ENCODE measurements at regions of chr10 and their contacts with region 1.

Region 1: DNA sequence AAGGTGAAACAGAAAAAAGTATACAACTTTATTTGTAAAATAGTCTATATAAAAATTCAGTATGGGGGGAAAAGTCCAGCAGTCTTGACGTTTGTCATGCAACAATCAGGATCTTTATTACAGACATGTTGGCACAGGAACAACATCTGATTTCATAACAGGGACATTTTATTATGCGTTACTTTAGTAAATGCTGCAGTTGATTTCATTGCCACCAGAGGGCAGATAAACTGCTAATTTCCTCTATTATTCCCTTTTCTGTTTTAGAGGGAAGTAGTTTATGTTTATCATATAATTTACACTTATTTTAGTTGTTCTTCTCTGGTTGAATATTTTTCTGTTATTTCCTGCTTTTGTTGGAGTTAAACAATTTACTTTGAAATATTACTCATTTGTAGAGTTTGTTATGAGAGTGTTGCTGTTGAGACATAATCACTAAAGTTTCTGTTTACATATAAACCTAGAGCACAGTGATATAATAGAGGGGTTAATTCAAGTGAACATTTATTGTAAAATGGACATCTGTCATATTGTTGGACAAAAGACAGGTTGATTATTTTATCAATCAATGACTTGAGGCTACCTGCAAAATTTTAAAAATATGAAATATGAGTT is 3.3 kb downstream of the PLXDC2 start:
- DNase-seq: peak; percentile 43
- ATAC-seq: no peak
- H3K4me3 ChIP-seq: no peak overlapping the region
- H3K27ac ChIP-seq: no peak overlapping the region
- H3K4me1 ChIP-seq: no peaks in the 10 kb centered on the region
- H3K27me3 ChIP-seq: peaks cover 2% of the 10 kb centered on the region; the same call in 1 of the 2 replicates
- CTCF ChIP-seq: peak; percentile 74
- POLR2A ChIP-seq: no peak
- RAD21 ChIP-seq: peak; percentile 66

Region 2: GRCh38 chr10:19412531-19412930 is 407.0 kb before region 1 on chr10:
- CTCF ChIA-PET with region 1: no interaction called
- POLR2A ChIA-PET with region 1: no interaction called
- dilution Hi-C with region 1: no loop called
- in situ Hi-C with region 1: no loop called
- intact Hi-C with region 1: loop called (anchors 1 kb)
- DNase-seq: peak; percentile 45
- ATAC-seq: peak; percentile 69
- H3K4me3 ChIP-seq: no peak overlapping the region
- H3K27ac ChIP-seq: no peak overlapping the region
- H3K4me1 ChIP-seq: no peaks in the 10 kb centered on the region
- H3K27me3 ChIP-seq: no peaks in the 10 kb centered on the region
- CTCF ChIP-seq: peak; percentile 52
- POLR2A ChIP-seq: no peak
- RAD21 ChIP-seq: peak; percentile 66

Region 3: DNA sequence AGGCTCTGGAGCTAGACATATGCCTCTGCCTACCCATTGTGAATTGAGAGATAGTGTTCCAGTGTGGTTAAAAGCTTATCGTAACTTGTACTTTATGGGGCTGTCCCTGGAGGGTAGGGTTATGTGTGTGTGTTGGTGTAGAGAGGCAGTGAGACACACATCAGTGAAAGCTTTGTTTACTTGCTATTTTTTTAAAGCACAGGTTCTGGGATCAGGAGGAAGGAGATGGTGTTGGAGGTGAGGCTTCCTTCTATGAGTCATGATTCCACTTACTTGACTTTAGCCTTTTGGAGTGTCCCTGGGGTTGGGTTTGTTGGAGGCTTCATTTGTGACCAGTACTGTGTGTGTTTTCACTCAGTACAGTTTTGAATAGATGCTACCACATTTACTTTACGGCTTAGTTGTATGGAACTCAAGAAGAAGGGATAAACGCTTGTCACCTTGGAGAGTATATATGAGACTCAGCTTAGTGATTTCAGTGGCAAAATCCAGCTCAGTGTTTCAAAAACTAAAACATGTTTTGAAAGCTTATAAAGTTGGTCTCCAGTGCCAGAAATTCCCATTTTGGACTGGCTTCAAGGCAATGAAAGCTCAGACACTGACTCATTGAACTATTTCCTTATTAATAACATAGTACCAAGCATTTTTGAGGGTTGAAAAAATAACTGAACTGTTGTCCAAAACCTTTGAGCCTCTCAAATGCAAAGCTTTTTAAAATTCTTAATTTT is 102.9 kb after region 1 on chr10:
- CTCF ChIA-PET with region 1: no interaction called
- POLR2A ChIA-PET with region 1: no interaction called
- dilution Hi-C with region 1: no loop called
- in situ Hi-C with region 1: no loop called
- intact Hi-C with region 1: loop called (anchors 2 kb)
- DNase-seq: peak; percentile 71
- ATAC-seq: peak; percentile 65
- H3K4me3 ChIP-seq: no peak overlapping the region
- H3K27ac ChIP-seq: 0 out of 2 replicates have a peak overlapping the region, but pooled peaks have one; percentile 40
- H3K4me1 ChIP-seq: peaks cover 13% of the 10 kb centered on the region
- H3K27me3 ChIP-seq: no peaks in the 10 kb centered on the region
- CTCF ChIP-seq: no peak
- POLR2A ChIP-seq: no peak
- RAD21 ChIP-seq: no peak

Region 4: GRCh38 chr10:20105243-20105642 is 285.7 kb after region 1 on chr10:
- CTCF ChIA-PET with region 1: no interaction called
- POLR2A ChIA-PET with region 1: no interaction called
- dilution Hi-C with region 1: no loop called
- in situ Hi-C with region 1: no loop called
- intact Hi-C with region 1: loop called (anchors 5 kb)
- DNase-seq: peak; percentile 31
- ATAC-seq: peak; percentile 5; the same call in 1 of the 2 replicates
- H3K4me3 ChIP-seq: no peak overlapping the region
- H3K27ac ChIP-seq: peak overlapping the region; percentile 89
- H3K4me1 ChIP-seq: peaks cover 7% of the 10 kb centered on the region
- H3K27me3 ChIP-seq: no peaks in the 10 kb centered on the region
- CTCF ChIP-seq: no peak
- POLR2A ChIP-seq: no peak
- RAD21 ChIP-seq: no peak

Region 5: GRCh38 chr10:20768843-20769242 is 949.3 kb after region 1 on chr10:
- CTCF ChIA-PET with region 1: no interaction called
- POLR2A ChIA-PET with region 1: no interaction called
- dilution Hi-C with region 1: no loop called
- in situ Hi-C with region 1: no loop called
- intact Hi-C with region 1: loop called (anchors 2 kb)
- DNase-seq: no peak
- ATAC-seq: no peak
- H3K4me3 ChIP-seq: no peak overlapping the region
- H3K27ac ChIP-seq: no peak overlapping the region
- H3K4me1 ChIP-seq: no peaks in the 10 kb centered on the region
- H3K27me3 ChIP-seq: no peaks in the 10 kb centered on the region
- CTCF ChIP-seq: peak; percentile 35
- POLR2A ChIP-seq: no peak
- RAD21 ChIP-seq: no peak; the same call in 1 of the 2 replicates

Region 6: DNA sequence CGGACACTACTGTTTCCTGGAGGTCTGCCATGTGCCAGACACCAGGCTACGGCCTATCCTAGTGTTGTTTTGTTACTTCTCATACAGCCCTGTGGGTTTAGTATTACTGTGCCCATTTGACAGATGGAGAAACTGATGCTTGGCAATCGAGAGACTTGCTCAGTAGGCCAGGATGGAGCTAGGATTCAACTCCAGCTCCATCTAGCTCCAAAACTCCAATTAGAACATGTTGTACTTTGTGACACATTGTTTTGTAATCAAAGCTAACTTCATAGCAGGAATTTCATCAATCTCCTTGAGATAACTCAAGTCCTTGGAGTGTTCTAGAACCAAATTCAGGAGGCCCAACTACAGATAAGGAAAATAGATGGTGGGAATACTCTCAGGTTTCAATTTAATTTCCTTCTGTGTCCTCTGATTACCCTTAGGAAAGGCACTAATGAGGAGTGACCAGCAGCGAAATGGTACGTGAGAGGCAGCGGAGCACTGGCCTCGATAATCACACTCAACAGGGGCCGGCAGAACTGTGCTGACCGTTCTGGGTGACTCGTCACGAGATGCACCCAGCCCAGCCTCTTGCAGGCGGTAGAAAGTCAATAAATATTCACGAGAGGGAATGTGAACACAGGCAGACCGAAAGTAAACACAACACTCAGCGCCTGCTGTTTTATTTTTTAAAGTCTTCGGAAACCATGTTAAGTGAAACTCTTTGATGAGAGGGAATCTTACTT is 1347.2 kb after region 1 on chr10:
- CTCF ChIA-PET with region 1: no interaction called
- POLR2A ChIA-PET with region 1: no interaction called
- dilution Hi-C with region 1: no loop called
- in situ Hi-C with region 1: no loop called
- intact Hi-C with region 1: no loop called
- DNase-seq: no peak
- ATAC-seq: no peak
- H3K4me3 ChIP-seq: no peak overlapping the region
- H3K27ac ChIP-seq: no peak overlapping the region
- H3K4me1 ChIP-seq: no peaks in the 10 kb centered on the region
- H3K27me3 ChIP-seq: no peaks in the 10 kb centered on the region
- CTCF ChIP-seq: no peak
- POLR2A ChIP-seq: no peak
- RAD21 ChIP-seq: no peak